Dorsolateral prefrontal cortex (tissue), 120 donors: ENCODE measurements at regions of chr4 and their contacts with region 1.

Region 1: DNA sequence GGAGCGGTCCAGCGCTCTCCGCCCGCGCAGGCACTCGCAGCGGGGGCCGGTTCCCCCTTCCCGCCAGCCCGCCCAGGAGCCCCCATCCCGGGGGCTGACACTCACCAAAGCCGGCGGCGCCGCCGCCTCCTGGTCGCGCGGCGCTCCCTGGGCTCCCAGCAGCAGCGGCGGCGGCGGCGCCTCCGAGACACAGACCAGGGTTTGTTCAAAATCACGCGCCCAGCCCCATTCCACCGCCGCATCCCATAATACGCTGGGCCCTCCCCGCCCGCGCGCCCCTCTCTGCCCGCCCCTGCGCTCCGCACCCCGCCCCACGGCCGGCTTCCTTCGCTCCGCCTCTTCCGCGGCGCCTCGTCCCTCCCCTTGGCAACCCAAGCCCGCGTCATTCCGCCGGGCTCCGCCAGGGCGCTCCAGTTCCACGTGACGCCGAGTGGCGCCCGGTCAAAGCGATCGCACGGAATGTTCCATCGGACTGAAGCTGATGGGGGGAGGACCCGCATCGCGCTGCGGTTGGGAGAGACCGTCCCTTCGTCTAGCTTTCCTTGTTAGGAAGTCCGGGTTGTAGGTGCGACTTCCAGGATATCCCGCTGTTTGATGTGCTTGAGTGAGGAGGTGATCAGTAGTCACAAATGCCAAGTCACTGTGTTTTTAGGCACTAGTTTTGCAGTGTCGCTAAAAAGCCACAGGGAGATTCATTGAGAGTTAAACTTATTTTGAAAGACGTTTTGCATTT is 2.2 kb upstream of the LIN54 start:
- DNase-seq: peak; percentile 94 to 100 (median 96)
- H3K4me3 ChIP-seq: peak overlapping the region; percentile 45 to 98 (median 86)
- H3K27ac ChIP-seq: peak overlapping the region; percentile 63 to 98 (median 93)
- H3K27me3 ChIP-seq: no peaks in the 10 kb centered on the region
- CTCF ChIP-seq: peak in 55 of 56 donors; percentile 16 to 74 (median 53)

Region 2: GRCh38 chr4:82373816-82374625 is 638.8 kb before region 1 on chr4 and contains the start of gene HNRNPD:
- intact Hi-C with region 1: loop called (anchors 2 to 5 kb)
- DNase-seq: peak; percentile 91 to 98 (median 97)
- H3K4me3 ChIP-seq: peak within 1 kb of the TSS; percentile 65 to 99 (median 93)
- H3K27ac ChIP-seq: peak within 1 kb of the TSS; percentile 91 to 100 (median 98)
- H3K27me3 ChIP-seq: no peaks in the 10 kb centered on the region
- CTCF ChIP-seq: peak in 37 of 56 donors; percentile 5 to 63 (median 25)
- total RNA-seq, gene HNRNPD: 81.5 to 203 (median 140) TPM

Region 3: DNA sequence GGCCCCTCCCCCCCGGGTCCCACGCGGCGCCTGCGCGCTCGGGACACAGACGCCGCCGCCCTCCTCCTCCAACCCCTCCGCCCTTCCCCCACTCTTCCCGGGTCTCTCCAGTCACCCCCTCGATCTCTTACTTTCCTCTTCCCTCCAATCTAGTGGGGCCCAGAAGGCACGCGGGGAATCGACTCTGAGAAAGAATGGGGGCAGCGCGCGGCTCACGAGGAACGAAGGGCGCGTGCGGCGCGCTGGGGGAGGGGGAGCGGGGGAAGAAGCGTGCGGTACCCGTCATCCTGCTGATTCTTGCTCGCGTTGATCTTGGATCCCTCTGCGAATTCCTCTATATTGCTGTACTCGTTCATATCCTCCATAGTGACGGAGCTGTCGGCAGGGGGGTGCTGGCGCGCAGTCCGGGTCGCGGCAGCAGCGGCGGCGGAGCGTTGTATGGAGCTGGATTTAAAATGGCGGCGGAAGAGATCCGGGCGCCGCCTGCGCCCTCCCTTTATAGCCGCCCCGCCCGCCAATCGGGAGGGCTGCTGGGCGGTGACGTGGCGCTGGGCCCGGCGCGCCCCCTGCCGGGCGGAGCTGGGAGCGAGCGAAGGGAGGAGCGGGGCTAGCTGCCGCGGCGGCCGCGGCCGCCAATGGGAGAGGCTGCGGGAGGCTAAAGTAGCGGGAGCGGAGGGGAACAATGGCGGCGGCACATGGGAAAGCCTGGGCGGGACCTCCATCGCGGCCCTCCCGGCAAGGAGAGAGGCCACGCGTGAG is 583.7 kb before region 1 on chr4:
- intact Hi-C with region 1: loop called in 1 of 2 experiments (anchors 2 kb)
- DNase-seq: peak; percentile 77 to 94 (median 90)
- H3K4me3 ChIP-seq: peak overlapping the region; percentile 62 to 98 (median 92)
- H3K27ac ChIP-seq: peak overlapping the region; percentile 90 to 100 (median 98)
- H3K27me3 ChIP-seq: no peaks in the 10 kb centered on the region
- CTCF ChIP-seq: peak; percentile 67 to 99 (median 88)

Region 4: DNA sequence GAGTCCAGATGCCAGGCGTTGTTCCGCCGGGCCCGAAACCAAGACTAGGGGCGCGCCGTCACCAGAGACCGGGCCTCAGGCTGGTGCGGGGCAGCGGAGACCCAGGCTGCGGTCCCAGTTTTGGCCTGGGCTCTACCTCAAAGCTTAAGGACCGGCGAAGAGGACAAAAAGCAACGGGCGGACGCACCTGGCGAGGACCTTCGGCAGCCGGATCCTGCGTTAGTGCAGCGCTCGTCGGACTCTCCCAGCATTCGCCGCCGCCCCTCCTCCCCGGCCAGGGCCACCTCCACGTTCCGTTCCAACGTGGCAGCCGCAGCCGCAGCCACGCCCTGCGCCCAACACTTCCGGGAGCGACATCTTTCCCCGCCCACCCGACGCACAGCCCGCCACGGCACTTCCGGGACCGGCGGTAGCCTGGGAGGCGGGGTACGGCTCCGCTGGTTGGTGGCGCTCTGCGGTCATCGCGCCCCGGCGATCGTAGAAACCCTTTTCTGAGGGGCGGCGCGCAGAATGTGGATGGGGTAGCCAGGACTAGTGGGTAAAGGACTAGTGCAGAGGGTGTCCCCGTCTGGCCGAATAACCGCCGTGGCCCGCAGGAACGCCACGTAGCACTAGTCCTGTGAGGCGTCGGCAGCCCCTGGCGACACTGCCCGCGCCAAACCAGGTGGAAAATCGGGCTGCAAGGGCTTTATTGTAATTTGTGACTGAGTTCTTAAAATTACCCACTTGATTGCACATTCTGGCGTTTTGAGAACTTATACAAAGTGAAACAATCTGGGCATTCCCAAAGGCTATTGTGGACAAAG is 121.7 kb before region 1 on chr4 and contains the start of gene SEC31A:
- intact Hi-C with region 1: loop called in 1 of 2 experiments (anchors 2 kb)
- DNase-seq: peak; percentile 88 to 96 (median 92)
- H3K4me3 ChIP-seq: peak within 1 kb of the TSS; percentile 58 to 100 (median 91)
- H3K27ac ChIP-seq: peak within 1 kb of the TSS; percentile 62 to 99 (median 93)
- H3K27me3 ChIP-seq: no peaks in the 10 kb centered on the region
- CTCF ChIP-seq: peak in 50 of 56 donors; percentile 13 to 74 (median 44)
- total RNA-seq, gene SEC31A: 85.5 to 171 (median 130) TPM

Region 5: DNA sequence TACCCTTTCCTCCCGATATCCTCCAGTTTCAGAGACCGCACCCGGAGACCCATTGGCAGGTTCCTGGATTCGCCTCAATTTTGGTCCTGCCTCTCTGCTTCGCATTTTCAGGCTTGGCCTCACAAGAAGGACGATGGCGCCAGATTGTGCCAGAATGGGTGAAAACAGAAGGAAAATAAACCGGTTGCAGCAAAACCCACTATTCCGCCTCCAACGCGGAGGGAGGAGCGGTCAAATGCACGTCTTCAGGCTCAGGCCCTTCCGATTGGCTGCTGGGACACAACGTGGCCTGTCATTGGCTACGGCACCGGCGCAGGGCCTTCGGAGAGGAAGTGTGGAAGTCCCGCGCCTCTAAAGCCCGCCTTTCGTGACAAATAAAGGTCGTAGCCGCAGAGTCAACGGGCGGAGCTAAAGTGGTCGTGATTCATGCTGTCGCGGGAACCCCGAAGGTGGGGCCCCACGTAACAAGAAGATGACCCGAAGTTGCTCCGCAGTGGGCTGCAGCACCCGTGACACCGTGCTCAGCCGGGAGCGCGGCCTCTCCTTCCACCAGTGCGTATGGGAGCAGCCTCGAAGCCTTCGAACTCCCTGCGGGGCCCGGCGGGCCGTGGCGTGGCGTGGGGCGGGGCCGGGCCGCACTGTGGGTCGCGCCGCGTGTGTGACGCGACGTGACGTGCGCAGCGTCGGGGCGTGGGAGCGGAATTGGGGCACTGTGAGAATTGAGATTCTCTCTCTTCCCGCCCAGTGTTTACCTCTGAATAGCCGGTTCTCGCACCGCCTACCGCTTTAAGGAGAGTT is 112.3 kb before region 1 on chr4 and contains the start of gene THAP9:
- intact Hi-C with region 1: loop called in 1 of 2 experiments (anchors 1 kb)
- DNase-seq: peak; percentile 98 to 100 (median 99)
- H3K4me3 ChIP-seq: peak within 1 kb of the TSS; percentile 58 to 97 (median 85)
- H3K27ac ChIP-seq: peak within 1 kb of the TSS; percentile 80 to 100 (median 98)
- H3K27me3 ChIP-seq: no peaks in the 10 kb centered on the region
- CTCF ChIP-seq: peak in 20 of 56 donors; percentile 1 to 50 (median 15)
- total RNA-seq, gene THAP9: 4.1 to 16.4 (median 7.3) TPM

Region 6: GRCh38 chr4:83034630-83035494 is 22.0 kb after region 1 on chr4 and contains the start of gene COPS4:
- intact Hi-C with region 1: loop called (anchors 1 kb)
- DNase-seq: peak; percentile 87 to 99 (median 98)
- H3K4me3 ChIP-seq: peak within 1 kb of the TSS; percentile 65 to 97 (median 86)
- H3K27ac ChIP-seq: peak within 1 kb of the TSS; percentile 75 to 99 (median 93)
- H3K27me3 ChIP-seq: no peaks in the 10 kb centered on the region
- CTCF ChIP-seq: peak in 54 of 56 donors; percentile 15 to 72 (median 53)
- total RNA-seq, gene COPS4: 22.8 to 75.1 (median 50.8) TPM

Region 7: GRCh38 chr4:83170952-83171399 is 158.1 kb after region 1 on chr4:
- intact Hi-C with region 1: no loop called
- DNase-seq: no peak
- H3K4me3 ChIP-seq: no peak overlapping the region
- H3K27ac ChIP-seq: no peak overlapping the region
- H3K27me3 ChIP-seq: no peaks in the 10 kb centered on the region
- CTCF ChIP-seq: no peak